Activated CD4-positive, alpha-beta memory T cell treated with anti-CD3 and anti-CD28 coated beads, Interleukin-2, amount 10 ng/mL, durations not matched to agents 7 days and 5 days (primary cell): ENCODE measurements at regions of chr1 and their contacts with region 1.

Region 1: DNA sequence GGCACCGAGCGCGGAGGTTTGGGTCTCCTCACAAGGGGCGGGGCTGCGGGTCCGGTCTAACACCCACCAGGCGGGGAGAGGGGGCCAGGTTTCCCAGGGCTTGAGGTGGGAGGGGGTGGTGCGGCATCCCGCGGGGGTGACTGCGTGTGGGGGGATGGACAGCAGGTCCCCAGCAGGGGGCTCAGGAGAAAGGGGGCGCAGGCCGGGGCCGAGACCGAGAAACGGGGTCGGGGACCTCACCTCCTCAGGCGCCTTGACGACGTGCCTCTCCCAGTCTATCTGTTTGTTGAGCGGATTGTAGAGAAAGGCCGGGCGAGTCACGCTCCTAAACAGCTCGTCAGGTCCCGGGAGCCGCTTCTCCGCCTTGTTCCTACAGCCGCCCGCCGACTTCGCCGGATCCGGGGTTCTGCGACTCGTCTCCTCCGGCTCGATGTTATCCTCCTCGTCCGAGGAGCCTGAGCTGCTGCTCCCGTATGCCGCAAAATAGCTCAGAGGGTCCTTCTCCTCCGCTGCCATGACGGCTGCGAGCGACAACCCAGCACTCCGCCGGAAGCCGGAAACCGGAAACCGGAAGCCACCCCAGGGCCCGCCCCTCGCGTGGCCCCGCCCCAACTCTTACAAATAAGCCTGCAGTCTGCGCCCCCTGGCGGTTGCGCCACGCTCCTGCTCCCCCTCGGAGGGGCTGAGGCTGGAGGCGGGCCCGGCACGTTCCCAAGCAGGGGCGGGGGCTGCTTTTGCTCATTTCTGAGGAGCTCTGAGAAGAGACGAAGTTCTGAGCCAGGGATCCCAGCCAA is at the start of gene C1orf52:
- DNase-seq: peak; percentile 95
- H3K4me3 Mint-ChIP-seq: peak within 1 kb of the TSS; percentile 90
- H3K27ac Mint-ChIP-seq: peak within 1 kb of the TSS; percentile 90
- H3K4me1 Mint-ChIP-seq: peaks cover 31% of the 10 kb centered on the region
- H3K27me3 Mint-ChIP-seq: no peaks in the 10 kb centered on the region
- total RNA-seq, gene C1orf52: 21.4 to 22.6 TPM

Region 2: GRCh38 chr1:84944767-84945486 is 314.4 kb before region 1 on chr1:
- CTCF ChIA-PET with region 1: interaction called, 170 read pairs
- POLR2A ChIA-PET with region 1: interaction called, 32 read pairs
- DNase-seq: peak; percentile 74
- H3K4me3 Mint-ChIP-seq: peak overlapping the region; percentile 73
- H3K27ac Mint-ChIP-seq: peak overlapping the region; percentile 73
- H3K4me1 Mint-ChIP-seq: peaks cover 15% of the 10 kb centered on the region
- H3K27me3 Mint-ChIP-seq: no peaks in the 10 kb centered on the region

Region 3: DNA sequence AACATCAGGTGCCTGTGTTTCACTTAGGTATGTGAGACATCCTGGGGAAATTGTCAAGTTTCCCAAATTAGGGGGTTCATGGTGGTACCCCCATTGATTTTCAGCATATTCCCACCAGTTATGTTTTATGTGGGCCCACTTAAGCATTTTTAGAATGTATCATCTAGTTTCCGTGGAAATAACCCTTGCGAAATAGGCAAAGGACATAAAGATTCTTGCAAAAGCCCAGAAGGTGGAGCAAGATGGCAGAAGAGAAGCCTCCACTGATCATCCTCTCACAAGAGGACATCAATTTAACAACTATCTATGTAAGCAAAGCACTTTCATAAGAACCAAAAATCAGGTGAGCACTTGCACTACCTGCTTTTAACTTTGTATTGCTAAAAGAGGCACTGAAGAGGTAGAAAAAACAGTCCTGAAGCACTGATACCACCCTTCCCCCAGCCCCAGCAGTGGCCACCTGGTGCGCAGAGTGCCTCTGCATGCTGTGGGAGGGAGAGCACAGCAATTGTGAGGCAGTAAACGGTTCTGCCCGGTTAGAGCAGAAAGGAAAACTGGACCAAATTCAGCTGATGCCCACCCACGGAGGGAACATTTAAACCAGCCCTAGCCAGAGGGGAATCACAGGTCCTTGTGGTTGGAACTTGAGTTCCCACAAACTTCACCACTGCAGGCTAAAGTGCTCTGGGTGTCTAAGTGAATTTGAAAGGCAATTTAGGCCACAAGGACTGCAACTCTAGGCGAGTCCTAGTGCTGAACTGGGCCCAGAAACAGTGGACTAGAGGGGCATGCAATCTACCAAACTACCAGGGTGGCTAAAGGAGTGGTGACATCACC is 285.6 kb before region 1 on chr1:
- CTCF ChIA-PET with region 1: interaction called, 12 read pairs
- POLR2A ChIA-PET with region 1: interaction called, 4 read pairs
- DNase-seq: no peak
- H3K4me3 Mint-ChIP-seq: no peak overlapping the region
- H3K27ac Mint-ChIP-seq: peak overlapping the region; percentile 93
- H3K4me1 Mint-ChIP-seq: peaks cover 77% of the 10 kb centered on the region
- H3K27me3 Mint-ChIP-seq: no peaks in the 10 kb centered on the region

Region 4: DNA sequence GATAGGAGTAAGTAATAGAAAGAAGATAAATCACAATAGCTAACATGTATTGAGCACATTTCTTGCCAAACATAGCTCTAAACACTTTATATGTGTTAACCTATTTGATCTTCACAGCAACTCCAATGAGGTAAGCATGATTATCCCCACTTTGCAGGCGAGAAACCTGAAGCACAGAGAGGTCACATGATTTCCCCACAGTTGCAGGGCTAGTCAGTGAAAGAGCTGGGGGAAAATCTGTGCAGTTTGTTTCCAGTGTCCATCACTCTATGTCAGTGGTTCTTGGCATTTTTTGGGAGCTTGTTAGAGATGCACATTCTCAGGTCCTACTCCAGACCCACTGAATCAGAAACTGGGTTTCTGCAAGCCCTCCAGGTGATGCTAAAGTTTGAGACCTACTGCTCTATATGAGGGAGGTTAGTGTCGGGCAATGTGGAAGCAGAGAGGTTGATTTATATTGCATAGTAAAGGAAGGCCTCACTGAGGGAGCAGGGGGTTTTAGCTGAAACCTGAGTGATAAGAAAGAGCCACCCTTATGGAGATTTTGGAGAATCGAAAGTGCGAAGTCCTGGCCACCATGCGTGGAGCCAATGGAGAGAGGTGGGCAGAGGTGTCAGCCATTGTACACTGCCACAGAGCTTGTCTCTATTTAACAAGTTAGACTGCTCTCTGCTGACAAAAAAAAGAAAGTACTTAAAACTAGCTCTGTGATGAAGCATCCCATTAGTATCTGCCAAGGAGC is 231.9 kb before region 1 on chr1:
- CTCF ChIA-PET with region 1: interaction called, 16 read pairs
- POLR2A ChIA-PET with region 1: no interaction called
- DNase-seq: peak; percentile 24
- H3K4me3 Mint-ChIP-seq: peak overlapping the region; percentile 5
- H3K27ac Mint-ChIP-seq: peak overlapping the region; percentile 17
- H3K4me1 Mint-ChIP-seq: peaks cover 9% of the 10 kb centered on the region
- H3K27me3 Mint-ChIP-seq: no peaks in the 10 kb centered on the region

Region 5: GRCh38 chr1:85240174-85240601 is 19.1 kb before region 1 on chr1:
- CTCF ChIA-PET with region 1: interaction called, 16 read pairs
- POLR2A ChIA-PET with region 1: interaction called, 4 read pairs
- DNase-seq: no peak
- H3K4me3 Mint-ChIP-seq: no peak overlapping the region
- H3K27ac Mint-ChIP-seq: no peak overlapping the region
- H3K4me1 Mint-ChIP-seq: peaks cover 13% of the 10 kb centered on the region
- H3K27me3 Mint-ChIP-seq: peaks cover 3% of the 10 kb centered on the region

Region 6: DNA sequence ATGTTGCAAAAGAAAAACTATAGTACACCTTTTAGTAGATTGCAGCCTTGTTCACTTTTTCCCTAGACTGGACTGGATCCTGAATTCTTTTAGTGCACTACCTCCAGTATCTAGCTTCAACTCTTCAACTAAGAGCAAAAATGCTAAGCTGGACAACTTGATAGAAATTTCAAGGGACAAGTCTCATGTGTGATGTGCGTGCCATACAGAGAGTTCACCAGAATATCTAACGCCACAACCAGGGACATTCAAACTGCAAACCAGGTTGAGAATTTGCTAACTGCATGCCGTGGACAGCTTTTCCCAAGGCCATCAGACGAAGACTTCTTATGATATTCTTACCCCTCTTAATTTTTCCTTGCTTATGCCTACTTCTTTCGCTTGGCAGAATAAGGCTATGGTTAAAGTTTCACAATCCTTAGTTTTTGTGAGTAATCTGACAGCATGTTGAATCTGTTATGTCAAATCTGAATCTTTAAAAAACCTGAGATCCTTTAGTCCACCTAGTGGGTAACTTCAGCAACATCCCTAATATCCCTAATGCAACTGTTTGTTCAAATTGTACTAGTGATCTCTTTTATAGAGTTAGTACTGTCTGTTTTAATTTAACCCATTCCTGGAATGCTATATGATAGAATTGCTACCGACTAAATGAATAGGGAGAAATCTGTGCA is 139.2 kb after region 1 on chr1:
- CTCF ChIA-PET with region 1: no interaction called
- POLR2A ChIA-PET with region 1: no interaction called
- DNase-seq: no peak
- H3K4me3 Mint-ChIP-seq: no peak overlapping the region
- H3K27ac Mint-ChIP-seq: no peak overlapping the region
- H3K4me1 Mint-ChIP-seq: no peaks in the 10 kb centered on the region
- H3K27me3 Mint-ChIP-seq: no peaks in the 10 kb centered on the region

Region 7: DNA sequence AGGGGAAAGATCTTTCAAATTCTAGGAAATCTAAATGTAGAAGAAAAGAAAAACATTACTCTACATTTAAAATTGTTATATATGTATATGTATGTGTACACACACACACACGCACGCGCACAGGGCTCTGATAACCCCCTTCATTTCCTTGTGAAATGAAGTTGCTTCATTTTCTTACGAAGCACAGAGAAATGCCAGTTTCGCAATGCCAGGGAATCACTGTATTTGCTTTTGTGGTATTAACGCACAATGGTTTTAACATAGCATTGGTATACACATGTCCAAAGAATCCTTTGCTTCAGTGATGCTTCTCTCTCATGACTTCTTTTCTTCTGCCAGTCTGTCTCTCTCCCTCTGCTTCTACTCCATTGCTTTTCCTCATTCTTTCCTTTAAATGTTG is 214.1 kb after region 1 on chr1:
- CTCF ChIA-PET with region 1: no interaction called
- POLR2A ChIA-PET with region 1: no interaction called
- DNase-seq: no peak
- H3K4me3 Mint-ChIP-seq: no peak overlapping the region
- H3K27ac Mint-ChIP-seq: no peak overlapping the region
- H3K4me1 Mint-ChIP-seq: no peaks in the 10 kb centered on the region
- H3K27me3 Mint-ChIP-seq: peaks cover 9% of the 10 kb centered on the region